ENCODE measurements at regions of chr6 and their contacts with region 1.

Region 1: DNA sequence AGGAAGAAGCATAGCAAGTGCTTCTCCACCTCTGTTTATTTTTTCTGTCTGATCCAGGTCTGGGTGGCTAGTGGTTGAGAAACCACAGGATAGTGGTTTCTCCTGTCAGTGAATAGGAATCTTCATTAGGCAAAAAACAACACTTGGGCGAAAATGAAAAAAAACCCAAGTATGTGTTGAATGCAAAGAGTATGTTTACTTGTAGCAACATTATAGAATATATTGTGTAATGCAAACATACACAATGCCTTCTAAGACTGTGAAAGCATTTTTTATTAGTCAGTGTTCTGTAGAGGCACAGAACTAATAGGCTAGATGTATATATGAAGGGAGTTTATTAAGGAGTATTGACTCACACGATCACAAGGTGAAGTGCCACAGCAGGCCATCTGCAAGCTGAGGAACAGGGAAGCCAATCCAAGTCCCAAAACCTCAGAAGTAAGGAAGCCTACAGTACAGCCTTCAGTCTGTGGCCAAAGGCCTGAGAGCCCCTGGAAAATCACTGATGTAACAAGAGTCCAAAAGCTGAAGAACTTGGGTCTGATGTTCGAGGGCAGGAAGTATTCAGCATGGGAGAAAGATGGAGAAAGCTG is 111.1 kb downstream of the UST start:
- DNase-seq: peak; percentile 95
- ATAC-seq: peak; percentile 95
- H3K4me3 ChIP-seq: no peak overlapping the region
- H3K27ac ChIP-seq: no peak overlapping the region; the same call in 1 of the 2 replicates
- H3K4me1 ChIP-seq: peaks cover 8% of the 10 kb centered on the region
- H3K27me3 ChIP-seq: peaks cover 2% of the 10 kb centered on the region; the same call in 1 of the 2 replicates
- CTCF ChIP-seq: no peak
- POLR2A ChIP-seq: no peak
- RAD21 ChIP-seq: no peak

Region 2: GRCh38 chr6:148746363-148747144 is 111.3 kb before region 1 on chr6 and contains the start of gene UST:
- CTCF ChIA-PET with region 1: no interaction called
- POLR2A ChIA-PET with region 1: no interaction called
- dilution Hi-C with region 1: no loop called
- in situ Hi-C with region 1: no loop called
- intact Hi-C with region 1: loop called (anchors 5 kb)
- DNase-seq: peak; percentile 95
- ATAC-seq: peak; percentile 92
- H3K4me3 ChIP-seq: peak within 1 kb of the TSS; percentile 87
- H3K27ac ChIP-seq: peak within 1 kb of the TSS; percentile 90
- H3K4me1 ChIP-seq: peaks cover 4% of the 10 kb centered on the region
- H3K27me3 ChIP-seq: no peaks in the 10 kb centered on the region
- CTCF ChIP-seq: peak; percentile 58
- POLR2A ChIP-seq: peak; percentile 57; the same call in 1 of the 2 replicates
- RAD21 ChIP-seq: peak; percentile 69
- total RNA-seq, gene UST: 13.8 and 14.4 TPM in 2 replicates

Region 3: GRCh38 chr6:149431905-149432775 is 574.2 kb after region 1 on chr6:
- CTCF ChIA-PET with region 1: no interaction called
- POLR2A ChIA-PET with region 1: no interaction called
- dilution Hi-C with region 1: no loop called
- in situ Hi-C with region 1: no loop called
- intact Hi-C with region 1: no loop called
- DNase-seq: peak; percentile 74
- ATAC-seq: peak; percentile 98
- H3K4me3 ChIP-seq: no peak overlapping the region
- H3K27ac ChIP-seq: no peak overlapping the region
- H3K4me1 ChIP-seq: 0 out of 2 replicates have a peak, but pooled peaks cover 2% of the 10 kb centered on the region
- H3K27me3 ChIP-seq: peaks cover 2% of the 10 kb centered on the region
- CTCF ChIP-seq: peak; percentile 93
- POLR2A ChIP-seq: no peak
- RAD21 ChIP-seq: peak; percentile 99

Measured in IMR-90 (cell line).